Thyroid gland (tissue), 4 donors: ENCODE measurements at regions of chr7 and their contacts with region 1.

Region 1: DNA sequence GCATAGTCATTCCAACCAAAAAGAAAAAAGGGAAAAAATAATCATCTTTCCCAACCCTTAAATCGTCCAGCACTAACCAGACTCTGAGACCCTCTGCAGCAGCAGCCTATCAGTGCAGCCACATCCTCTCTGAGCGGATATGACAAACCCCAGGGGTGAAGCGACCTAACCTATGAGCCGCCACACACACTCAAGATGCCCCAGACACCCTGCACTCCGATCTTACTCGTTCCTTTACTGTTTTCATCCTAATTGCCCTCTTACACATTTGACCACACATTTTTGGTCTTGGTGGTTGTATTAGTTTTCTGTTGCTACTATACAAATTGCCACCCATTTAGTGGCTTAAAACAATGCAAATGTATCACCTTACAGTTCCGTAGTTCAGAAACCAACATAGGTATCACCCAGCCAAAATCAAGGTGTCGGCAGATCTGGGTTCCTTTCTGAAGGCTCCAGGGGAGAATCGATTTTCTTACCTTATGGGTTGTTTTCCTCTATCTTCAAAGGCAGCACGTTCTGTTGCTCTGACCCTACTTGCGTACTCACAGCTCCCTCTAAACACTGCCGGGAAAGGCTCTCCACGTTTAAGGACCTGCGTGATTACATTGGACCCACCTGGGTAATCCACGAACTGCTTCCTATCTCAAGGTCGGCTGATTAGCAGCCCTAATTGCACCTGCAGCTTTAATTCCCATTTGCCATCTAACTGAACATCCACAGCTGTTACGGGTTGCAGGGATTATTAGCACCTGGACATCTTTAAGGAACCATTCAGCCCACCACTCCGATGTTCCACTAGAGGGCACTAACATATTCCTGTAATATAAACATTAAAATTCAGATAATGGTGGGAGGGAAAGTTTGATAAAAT is 37.3 kb upstream of the PRSS1 start:
- DNase-seq: peak; percentile 24 to 38
- H3K4me3 ChIP-seq: no peak overlapping the region
- H3K27ac ChIP-seq: no peak overlapping the region
- H3K4me1 ChIP-seq: no peaks in the 10 kb centered on the region
- H3K27me3 ChIP-seq: no peaks in the 10 kb centered on the region
- CTCF ChIP-seq: peak in 5 of 6 experiments; percentile 50 to 68 (median 63)
- POLR2A ChIP-seq: no peak

Region 2: GRCh38 chr7:142077762-142078161 is 634.2 kb before region 1 on chr7:
- intact Hi-C with region 1: no loop called
- DNase-seq: no peak
- H3K4me3 ChIP-seq: no peak overlapping the region
- H3K27ac ChIP-seq: no peak overlapping the region
- H3K4me1 ChIP-seq: no peaks in the 10 kb centered on the region
- H3K27me3 ChIP-seq: no peaks in the 10 kb centered on the region
- CTCF ChIP-seq: no peak
- POLR2A ChIP-seq: no peak

Region 3: GRCh38 chr7:142420559-142421362 is 291.2 kb before region 1 on chr7:
- intact Hi-C with region 1: no loop called
- DNase-seq: no peak
- H3K4me3 ChIP-seq: no peak overlapping the region
- H3K27ac ChIP-seq: no peak overlapping the region
- H3K4me1 ChIP-seq: no peaks in the 10 kb centered on the region
- H3K27me3 ChIP-seq: no peaks in the 10 kb centered on the region
- CTCF ChIP-seq: no peak
- POLR2A ChIP-seq: no peak

Region 4: GRCh38 chr7:142657376-142657775 is 54.6 kb before region 1 on chr7:
- intact Hi-C with region 1: no loop called
- DNase-seq: no peak
- H3K4me3 ChIP-seq: no peak overlapping the region
- H3K27ac ChIP-seq: no peak overlapping the region
- H3K4me1 ChIP-seq: no peaks in the 10 kb centered on the region
- H3K27me3 ChIP-seq: no peaks in the 10 kb centered on the region
- CTCF ChIP-seq: no peak
- POLR2A ChIP-seq: no peak

Region 5: DNA sequence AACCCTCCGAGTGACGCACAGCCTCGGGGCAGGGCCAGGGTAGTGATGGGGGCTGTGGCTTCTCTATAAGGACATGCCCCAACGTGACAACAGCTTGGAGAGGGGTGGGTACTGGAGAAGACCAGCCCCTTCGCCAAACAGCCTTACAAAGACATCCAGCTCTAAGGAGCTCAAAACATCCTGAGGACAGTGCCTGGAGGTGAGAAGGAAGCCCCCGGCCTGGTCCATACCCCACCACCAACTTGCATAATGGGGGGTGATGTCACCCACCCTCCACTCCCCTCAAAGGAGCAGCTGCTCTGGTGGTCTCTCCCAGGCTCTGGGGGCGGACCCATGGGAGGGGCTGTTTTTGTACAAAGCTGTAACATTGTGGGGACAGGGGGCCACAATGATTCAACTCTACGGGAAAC is 73.9 kb after region 1 on chr7:
- intact Hi-C with region 1: loop called (anchors 2 kb)
- DNase-seq: peak in 1 of 2 donors; percentile 18
- H3K4me3 ChIP-seq: no peak overlapping the region
- H3K27ac ChIP-seq: no peak overlapping the region
- H3K4me1 ChIP-seq: peaks cover 0 to 4% of the 10 kb centered on the region in 2 donors
- H3K27me3 ChIP-seq: no peaks in the 10 kb centered on the region
- CTCF ChIP-seq: no peak
- POLR2A ChIP-seq: no peak

Region 6: GRCh38 chr7:143120696-143121405 is 408.9 kb after region 1 on chr7:
- intact Hi-C with region 1: no loop called
- DNase-seq: no peak
- H3K4me3 ChIP-seq: no peak overlapping the region
- H3K27ac ChIP-seq: no peak overlapping the region
- H3K4me1 ChIP-seq: no peaks in the 10 kb centered on the region
- H3K27me3 ChIP-seq: no peaks in the 10 kb centered on the region
- CTCF ChIP-seq: no peak
- POLR2A ChIP-seq: no peak